Naive thymus-derived CD4-positive, alpha-beta T cell (primary cell): ENCODE measurements at regions of chr1 and their contacts with region 1.

Region 1: DNA sequence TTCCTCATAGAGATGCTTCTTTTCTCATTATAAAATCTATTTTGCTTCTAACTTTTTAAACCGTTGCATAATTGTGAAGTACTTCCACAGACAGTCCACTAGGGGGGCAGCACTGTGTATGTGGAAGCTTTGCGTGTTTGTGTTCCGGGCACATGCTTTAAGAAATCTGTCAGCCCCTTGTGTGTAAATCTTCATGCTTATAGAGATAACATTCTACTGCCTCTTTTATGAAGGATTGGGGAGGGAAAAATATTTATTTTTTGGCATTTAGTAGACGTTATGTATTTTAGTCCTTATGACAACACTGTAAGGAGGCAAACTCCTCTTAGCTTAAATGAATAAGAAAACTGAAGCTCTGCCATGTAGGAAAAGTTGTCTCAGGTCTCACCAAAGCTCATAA is 157.3 kb upstream of the PTGFR start:
- DNase-seq: peak in 1 of 9 donors; percentile 4
- ATAC-seq: no peak
- H3K4me3 ChIP-seq: no peak overlapping the region
- H3K4me3 Mint-ChIP-seq: no peak overlapping the region
- H3K27ac ChIP-seq: no peak overlapping the region
- H3K27ac Mint-ChIP-seq: no peak overlapping the region
- H3K4me1 ChIP-seq: no peaks in the 10 kb centered on the region
- H3K4me1 Mint-ChIP-seq: no peaks in the 10 kb centered on the region
- H3K27me3 ChIP-seq: no peaks in the 10 kb centered on the region
- H3K27me3 Mint-ChIP-seq: peaks cover 0 to 20% (median 8%) of the 10 kb centered on the region in 5 donors

Region 2: DNA sequence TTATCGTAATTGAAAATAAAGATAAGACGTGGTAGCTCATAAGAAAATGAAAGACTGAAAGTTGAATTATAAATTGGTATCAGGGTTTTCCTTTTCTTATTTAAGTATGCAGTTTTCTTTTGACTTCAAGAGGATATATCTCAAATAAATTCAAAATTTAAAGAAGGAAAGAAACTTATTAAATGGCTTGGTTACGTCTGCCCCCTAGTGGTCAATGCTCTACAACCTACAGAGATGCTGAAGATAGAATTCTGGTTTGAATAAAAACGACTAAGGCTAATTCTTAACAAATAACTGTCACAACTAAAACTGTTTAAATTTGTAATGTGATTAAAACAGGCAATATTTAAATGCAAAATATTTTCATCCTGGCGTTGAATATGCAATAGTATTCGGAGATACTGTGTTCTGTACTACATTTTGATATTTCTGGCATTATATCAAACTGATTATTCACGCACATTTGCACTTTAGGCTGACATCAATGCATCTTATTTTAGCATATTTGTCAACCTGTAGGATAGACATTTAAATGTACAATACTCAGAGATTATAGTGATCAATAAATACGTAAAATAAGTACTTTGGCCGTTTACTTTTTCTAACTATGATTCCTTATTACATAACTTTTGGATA is 343.0 kb after region 1 on chr1:
- CTCF ChIA-PET with region 1: no interaction called
- POLR2A ChIA-PET with region 1: no interaction called
- intact Hi-C with region 1: loop called (anchors 1 to 10 kb)
- DNase-seq: peak in 7 of 9 donors; percentile 38 to 72 (median 62)
- ATAC-seq: peak; percentile 67
- H3K4me3 ChIP-seq: no peak overlapping the region
- H3K4me3 Mint-ChIP-seq: no peak overlapping the region
- H3K27ac ChIP-seq: no peak overlapping the region
- H3K27ac Mint-ChIP-seq: no peak overlapping the region
- H3K4me1 ChIP-seq: no peaks in the 10 kb centered on the region
- H3K4me1 Mint-ChIP-seq: peaks cover 3 to 33% (median 6%) of the 10 kb centered on the region in 7 donors
- H3K27me3 ChIP-seq: no peaks in the 10 kb centered on the region
- H3K27me3 Mint-ChIP-seq: peaks cover 0 to 6% (median 0%) of the 10 kb centered on the region in 5 donors